AG04450 (cell line): ENCODE measurements at regions of chr22 and their contacts with region 1.

Region 1: GRCh38 chr22:17171313-17172171 is 12.5 kb upstream of the HDHD5 start:
- DNase-seq: peak; percentile 74
- H3K4me3 ChIP-seq: peak overlapping the region; percentile 72
- H3K27ac ChIP-seq: peak overlapping the region; percentile 81
- H3K27me3 ChIP-seq: no peaks in the 10 kb centered on the region
- CTCF ChIP-seq: peak; percentile 93

Region 2: DNA sequence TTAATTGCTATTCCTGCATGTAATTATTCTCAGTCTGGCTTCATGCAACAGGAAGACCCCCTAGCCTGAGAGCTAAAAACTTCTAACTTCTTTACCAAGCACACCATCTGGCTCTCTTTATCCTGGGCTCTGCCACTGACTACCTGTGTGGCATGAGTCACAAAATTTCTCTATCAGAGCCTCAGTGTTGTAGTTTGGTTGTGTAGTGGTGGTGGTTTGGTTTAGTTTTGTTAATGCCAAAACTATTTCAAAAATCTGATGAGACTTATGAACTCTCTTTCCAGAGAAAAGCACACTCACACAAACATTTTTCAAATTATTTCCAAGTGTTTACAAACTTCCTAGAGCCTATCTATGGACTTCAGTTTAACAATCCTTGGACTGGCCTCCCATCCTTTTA is 94.3 kb before region 1 on chr22:
- CTCF ChIA-PET with region 1: interaction called, 228 read pairs
- POLR2A ChIA-PET with region 1: no interaction called
- DNase-seq: peak; percentile 51
- H3K4me3 ChIP-seq: no peak overlapping the region
- H3K27ac ChIP-seq: peak overlapping the region; percentile 39
- H3K27me3 ChIP-seq: no peaks in the 10 kb centered on the region
- CTCF ChIP-seq: no peak

Region 3: GRCh38 chr22:17131686-17132085 is 39.9 kb before region 1 on chr22:
- CTCF ChIA-PET with region 1: interaction called, 17 read pairs
- POLR2A ChIA-PET with region 1: interaction called, 4 read pairs
- DNase-seq: no peak
- H3K4me3 ChIP-seq: no peak overlapping the region
- H3K27ac ChIP-seq: no peak overlapping the region
- H3K27me3 ChIP-seq: no peaks in the 10 kb centered on the region
- CTCF ChIP-seq: no peak

Region 4: GRCh38 chr22:17158568-17159503 is 12.7 kb before region 1 on chr22 and contains the start of gene HDHD5:
- CTCF ChIA-PET with region 1: interaction called, 196 read pairs
- POLR2A ChIA-PET with region 1: interaction called, 6 read pairs
- DNase-seq: peak; percentile 49
- H3K4me3 ChIP-seq: peak within 1 kb of the TSS; percentile 74
- H3K27ac ChIP-seq: peak within 1 kb of the TSS; percentile 81
- H3K27me3 ChIP-seq: no peaks in the 10 kb centered on the region
- CTCF ChIP-seq: no peak
- polyA plus RNA-seq, gene HDHD5: 14.4 and 17.0 TPM in 2 replicates

Region 5: GRCh38 chr22:17213976-17214375 is 42.4 kb after region 1 on chr22:
- CTCF ChIA-PET with region 1: interaction called, 10 read pairs
- POLR2A ChIA-PET with region 1: no interaction called
- DNase-seq: no peak
- H3K4me3 ChIP-seq: no peak overlapping the region
- H3K27ac ChIP-seq: no peak overlapping the region
- H3K27me3 ChIP-seq: no peaks in the 10 kb centered on the region
- CTCF ChIP-seq: peak; percentile 29; the same call in 1 of the 2 replicates

Region 6: DNA sequence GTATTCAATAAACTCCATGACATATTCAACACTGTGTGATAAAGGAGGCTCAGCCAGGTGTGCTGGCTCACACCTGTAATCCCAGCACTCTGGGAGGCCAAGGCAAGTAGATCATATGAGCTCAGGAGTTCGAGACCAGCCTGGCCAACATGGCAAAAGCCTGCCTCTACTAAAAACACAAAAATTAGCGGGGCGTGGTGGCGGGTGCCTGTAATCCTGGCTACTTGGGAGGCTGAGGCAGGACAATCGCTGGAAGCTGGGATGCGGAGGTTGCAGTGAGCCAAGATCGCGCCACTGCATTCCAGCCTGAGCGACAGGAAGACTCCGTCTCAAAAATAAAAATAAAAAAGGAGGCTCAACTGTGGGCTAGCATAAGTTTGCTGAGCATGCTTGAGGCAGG is 387.6 kb after region 1 on chr22:
- CTCF ChIA-PET with region 1: interaction called, 13 read pairs
- POLR2A ChIA-PET with region 1: no interaction called
- DNase-seq: no peak
- H3K4me3 ChIP-seq: no peak overlapping the region
- H3K27ac ChIP-seq: no peak overlapping the region
- H3K27me3 ChIP-seq: peaks cover 13% of the 10 kb centered on the region
- CTCF ChIP-seq: no peak